Mammary epithelial cell (primary cell): ENCODE measurements at regions of chr1 and their contacts with region 1.

Region 1: DNA sequence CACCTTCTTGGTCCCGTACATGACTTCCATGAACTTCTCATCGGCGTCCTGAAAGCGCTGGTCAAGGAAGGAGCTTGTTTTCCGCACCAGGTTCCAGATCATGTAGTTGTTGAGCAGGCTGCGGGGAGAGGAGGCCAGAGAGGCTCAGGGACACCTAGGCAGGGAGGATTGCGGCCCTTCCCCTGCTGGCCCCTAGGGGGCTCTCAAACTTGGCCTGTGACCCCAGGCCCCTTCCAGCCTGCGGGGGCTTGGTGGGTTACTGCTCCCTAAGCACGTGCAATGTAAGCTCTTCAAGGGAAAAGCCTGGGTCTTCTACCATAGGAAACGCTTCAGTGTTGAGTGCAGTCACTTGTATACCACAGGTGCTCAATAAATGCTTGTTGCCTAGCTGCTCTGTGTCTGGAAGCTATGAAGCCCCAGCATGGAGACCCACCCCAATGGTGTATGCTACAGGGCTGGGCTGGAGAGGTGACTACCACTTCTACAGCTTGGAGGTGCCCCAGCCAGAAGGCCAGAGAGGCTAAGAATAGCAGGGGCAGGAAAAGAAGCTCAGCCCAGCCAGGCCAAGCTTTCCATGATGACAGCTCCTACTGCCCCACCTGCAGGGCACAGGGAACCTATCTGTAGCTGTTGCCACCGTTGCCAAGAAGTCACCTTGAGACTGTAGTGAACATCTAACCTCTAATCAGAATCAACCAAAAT is 45.1 kb downstream of the ECE1 start:
- DNase-seq: no peak
- H3K4me3 ChIP-seq: no peak overlapping the region
- H3K27ac ChIP-seq: no peak overlapping the region
- H3K4me1 ChIP-seq: no peaks in the 10 kb centered on the region
- H3K27me3 ChIP-seq: no peaks in the 10 kb centered on the region
- CTCF ChIP-seq: peak; percentile 26 to 42

Region 2: GRCh38 chr1:20682571-20683236 is 562.4 kb before region 1 on chr1:
- CTCF ChIA-PET with region 1: no interaction called
- dilution Hi-C with region 1: loop called (anchors 10 kb)
- in situ Hi-C with region 1: no loop called
- intact Hi-C with region 1: no loop called
- DNase-seq: no peak
- H3K4me3 ChIP-seq: no peak overlapping the region
- H3K27ac ChIP-seq: no peak overlapping the region
- H3K4me1 ChIP-seq: no peaks in the 10 kb centered on the region
- H3K27me3 ChIP-seq: no peaks in the 10 kb centered on the region
- CTCF ChIP-seq: no peak

Region 3: DNA sequence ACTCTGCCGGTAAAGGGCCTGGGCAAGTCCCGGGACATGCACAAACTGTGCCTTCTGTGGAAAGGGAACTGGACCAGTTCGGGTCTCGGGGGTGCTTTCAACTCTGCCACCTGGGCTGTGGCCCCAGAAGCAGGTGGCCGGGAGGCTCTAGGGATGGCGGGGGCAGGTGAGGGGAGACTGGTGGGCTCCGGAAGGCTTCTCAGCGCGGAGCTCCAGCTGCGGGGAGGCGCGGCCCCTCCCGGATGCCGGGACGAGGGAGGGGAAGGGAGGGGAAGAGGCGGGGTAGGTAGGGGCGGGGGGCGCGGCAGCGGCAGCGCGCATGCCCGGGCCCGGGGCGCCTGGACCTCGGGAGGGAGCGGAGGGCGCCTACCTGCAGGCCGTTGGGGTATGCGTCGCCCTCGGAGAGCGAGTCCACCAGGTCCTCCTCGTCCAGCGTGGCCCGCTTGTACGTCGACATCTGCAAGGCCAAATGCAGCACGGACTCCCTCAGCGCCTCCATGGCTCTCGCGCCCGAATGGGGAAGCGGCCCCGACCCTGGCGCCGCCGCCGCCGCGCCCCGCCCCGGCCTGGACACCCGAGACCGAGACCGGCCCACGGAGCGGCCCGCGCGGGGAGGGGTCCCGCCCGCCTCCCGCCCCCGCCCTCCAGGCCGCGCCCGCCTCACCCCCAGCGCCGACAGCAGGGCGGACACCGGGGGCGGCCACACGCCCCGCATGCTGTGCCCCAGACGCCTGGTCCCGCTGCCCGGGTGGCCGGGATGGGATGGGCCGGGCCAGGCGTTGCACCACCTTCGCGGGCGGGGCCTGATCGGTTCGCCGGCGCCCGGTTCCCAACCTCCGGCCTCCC is 44.8 kb after region 1 on chr1 and contains the start of gene ECE1:
- CTCF ChIA-PET with region 1: no interaction called
- dilution Hi-C with region 1: no loop called
- in situ Hi-C with region 1: no loop called
- intact Hi-C with region 1: no loop called
- DNase-seq: no peak
- H3K4me3 ChIP-seq: peak within 1 kb of the TSS; percentile 59 to 75 (median 65)
- H3K27ac ChIP-seq: peak within 1 kb of the TSS; percentile 37
- H3K4me1 ChIP-seq: peaks cover 20% of the 10 kb centered on the region
- H3K27me3 ChIP-seq: no peaks in the 10 kb centered on the region
- CTCF ChIP-seq: no peak
- total RNA-seq, gene ECE1: 86.3 to 153 TPM

Region 4: GRCh38 chr1:21552715-21553114 is 307.6 kb after region 1 on chr1:
- CTCF ChIA-PET with region 1: no interaction called
- dilution Hi-C with region 1: loop called (anchors 5 kb)
- in situ Hi-C with region 1: no loop called
- intact Hi-C with region 1: no loop called
- DNase-seq: peak; percentile 63
- H3K4me3 ChIP-seq: no peak overlapping the region
- H3K27ac ChIP-seq: no peak overlapping the region
- H3K4me1 ChIP-seq: no peaks in the 10 kb centered on the region
- H3K27me3 ChIP-seq: no peaks in the 10 kb centered on the region
- CTCF ChIP-seq: no peak